PC-9 (cell line): ENCODE measurements at regions of chr1 and their contacts with region 1.

Region 1: DNA sequence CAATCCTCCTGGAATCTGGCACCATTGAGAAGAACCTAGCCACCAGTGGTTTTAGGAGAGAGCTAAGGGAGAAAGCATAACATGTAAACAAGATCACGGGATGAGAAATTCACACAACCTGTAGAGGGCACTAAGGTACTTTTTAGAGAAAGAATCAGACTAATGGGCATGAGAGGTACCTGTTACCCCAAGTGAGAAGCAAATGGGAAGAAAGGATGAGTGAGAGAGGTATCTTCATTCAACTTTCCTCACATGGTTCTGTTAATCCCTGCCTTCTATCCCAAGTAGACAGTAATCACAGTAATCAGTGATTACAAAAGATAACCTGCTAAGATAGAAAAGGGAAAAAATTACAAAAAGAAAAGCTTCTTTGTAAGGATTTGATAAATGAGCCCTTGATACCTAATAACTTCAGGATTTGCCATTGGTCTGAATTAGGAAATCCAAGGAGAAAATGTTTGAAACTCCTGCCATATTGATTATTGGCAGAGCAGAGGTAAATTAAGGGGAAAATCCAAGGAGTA is 251.1 kb upstream of the ADGRL2 start:
- DNase-seq: peak; percentile 5 to 69
- H3K4me3 ChIP-seq: no peak overlapping the region
- H3K27ac ChIP-seq: no peak overlapping the region
- H3K4me1 ChIP-seq: peaks cover 23% of the 10 kb centered on the region
- H3K27me3 ChIP-seq: no peaks in the 10 kb centered on the region
- CTCF ChIP-seq: peak; percentile 80

Region 2: GRCh38 chr1:81689531-81689941 is 139.9 kb after region 1 on chr1:
- CTCF ChIA-PET with region 1: no interaction called
- POLR2A ChIA-PET with region 1: no interaction called
- intact Hi-C with region 1: loop called (anchors 2 kb)
- DNase-seq: peak; percentile 75 to 93
- H3K4me3 ChIP-seq: peak overlapping the region; percentile 33
- H3K27ac ChIP-seq: peak overlapping the region; percentile 95
- H3K4me1 ChIP-seq: peaks cover 44% of the 10 kb centered on the region
- H3K27me3 ChIP-seq: no peaks in the 10 kb centered on the region
- CTCF ChIP-seq: no peak

Region 3: GRCh38 chr1:81702903-81703302 is 153.2 kb after region 1 on chr1:
- CTCF ChIA-PET with region 1: no interaction called
- POLR2A ChIA-PET with region 1: no interaction called
- intact Hi-C with region 1: loop called (anchors 2 kb)
- DNase-seq: peak in 1 of 2 experiments; percentile 98
- H3K4me3 ChIP-seq: peak overlapping the region; percentile 62
- H3K27ac ChIP-seq: peak overlapping the region; percentile 98
- H3K4me1 ChIP-seq: peaks cover 75% of the 10 kb centered on the region
- H3K27me3 ChIP-seq: no peaks in the 10 kb centered on the region
- CTCF ChIP-seq: no peak

Region 4: DNA sequence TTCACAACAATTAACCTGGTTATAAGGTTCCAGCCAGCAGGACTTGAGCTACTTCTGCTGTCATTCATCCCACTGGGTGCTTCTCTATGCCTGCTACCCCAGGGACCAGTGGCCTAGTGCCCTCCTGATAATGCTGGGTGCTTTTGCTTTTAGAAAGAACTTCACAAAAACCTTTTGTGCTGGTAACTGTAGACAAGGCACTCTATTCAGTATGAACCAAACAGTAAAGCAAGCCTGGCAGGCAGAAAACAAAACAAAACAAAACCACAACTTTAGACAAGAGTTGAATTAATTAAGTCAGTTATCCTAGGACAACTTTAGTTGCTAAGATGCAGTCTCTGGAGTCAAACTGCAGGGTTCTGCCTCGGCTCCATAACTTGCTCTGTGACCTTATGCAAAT is 189.2 kb after region 1 on chr1:
- CTCF ChIA-PET with region 1: no interaction called
- POLR2A ChIA-PET with region 1: interaction called, 12 read pairs
- intact Hi-C with region 1: no loop called
- DNase-seq: no peak
- H3K4me3 ChIP-seq: no peak overlapping the region
- H3K27ac ChIP-seq: no peak overlapping the region
- H3K4me1 ChIP-seq: no peaks in the 10 kb centered on the region
- H3K27me3 ChIP-seq: no peaks in the 10 kb centered on the region
- CTCF ChIP-seq: no peak

Region 5: DNA sequence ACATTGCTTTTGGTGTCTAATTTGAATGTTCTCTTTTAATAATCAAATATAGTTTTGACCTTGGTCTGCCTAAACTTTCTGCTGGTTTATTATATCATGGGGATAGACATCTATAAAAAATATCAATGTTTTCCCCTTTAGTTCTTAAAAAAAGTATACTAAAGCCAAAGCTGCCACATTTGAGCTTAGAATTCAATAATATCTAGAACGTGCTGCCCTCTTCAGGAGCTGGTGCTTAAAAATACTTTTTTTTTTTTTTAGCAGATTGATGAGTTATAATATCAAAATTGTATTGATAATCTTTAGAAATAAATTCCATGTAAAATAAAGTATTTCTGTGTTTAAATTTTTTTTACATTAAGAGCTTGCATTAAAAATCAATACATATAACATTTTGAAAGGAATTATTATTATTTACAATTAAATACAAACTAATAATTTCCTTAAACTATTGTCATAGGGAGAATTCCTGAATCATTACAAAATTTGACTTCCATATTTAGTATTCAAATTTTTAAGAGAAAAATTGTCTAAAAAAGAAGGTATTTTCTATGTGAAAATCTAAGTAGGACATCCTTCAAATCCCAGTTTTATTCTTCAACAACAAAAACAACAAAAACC is 210.9 kb after region 1 on chr1:
- CTCF ChIA-PET with region 1: interaction called, 8 read pairs
- POLR2A ChIA-PET with region 1: no interaction called
- intact Hi-C with region 1: loop called (anchors 2 kb)
- DNase-seq: no peak
- H3K4me3 ChIP-seq: no peak overlapping the region
- H3K27ac ChIP-seq: no peak overlapping the region
- H3K4me1 ChIP-seq: no peaks in the 10 kb centered on the region
- H3K27me3 ChIP-seq: no peaks in the 10 kb centered on the region
- CTCF ChIP-seq: peak; percentile 65

Region 6: GRCh38 chr1:81800695-81801650 is 251.3 kb after region 1 on chr1 and contains the start of gene ADGRL2:
- CTCF ChIA-PET with region 1: interaction called, 3 read pairs
- POLR2A ChIA-PET with region 1: no interaction called
- intact Hi-C with region 1: loop called (anchors 2 kb)
- DNase-seq: peak; percentile 70 to 81
- H3K4me3 ChIP-seq: peak within 1 kb of the TSS; percentile 96
- H3K27ac ChIP-seq: peak within 1 kb of the TSS; percentile 76
- H3K4me1 ChIP-seq: peaks cover 25% of the 10 kb centered on the region
- H3K27me3 ChIP-seq: no peaks in the 10 kb centered on the region
- CTCF ChIP-seq: no peak
- total RNA-seq, gene ADGRL2: 24.0 and 25.3 TPM in 2 replicates